Heart right ventricle (tissue), 16 donors: ENCODE measurements at regions of chr16 and their contacts with region 1.

Region 1: DNA sequence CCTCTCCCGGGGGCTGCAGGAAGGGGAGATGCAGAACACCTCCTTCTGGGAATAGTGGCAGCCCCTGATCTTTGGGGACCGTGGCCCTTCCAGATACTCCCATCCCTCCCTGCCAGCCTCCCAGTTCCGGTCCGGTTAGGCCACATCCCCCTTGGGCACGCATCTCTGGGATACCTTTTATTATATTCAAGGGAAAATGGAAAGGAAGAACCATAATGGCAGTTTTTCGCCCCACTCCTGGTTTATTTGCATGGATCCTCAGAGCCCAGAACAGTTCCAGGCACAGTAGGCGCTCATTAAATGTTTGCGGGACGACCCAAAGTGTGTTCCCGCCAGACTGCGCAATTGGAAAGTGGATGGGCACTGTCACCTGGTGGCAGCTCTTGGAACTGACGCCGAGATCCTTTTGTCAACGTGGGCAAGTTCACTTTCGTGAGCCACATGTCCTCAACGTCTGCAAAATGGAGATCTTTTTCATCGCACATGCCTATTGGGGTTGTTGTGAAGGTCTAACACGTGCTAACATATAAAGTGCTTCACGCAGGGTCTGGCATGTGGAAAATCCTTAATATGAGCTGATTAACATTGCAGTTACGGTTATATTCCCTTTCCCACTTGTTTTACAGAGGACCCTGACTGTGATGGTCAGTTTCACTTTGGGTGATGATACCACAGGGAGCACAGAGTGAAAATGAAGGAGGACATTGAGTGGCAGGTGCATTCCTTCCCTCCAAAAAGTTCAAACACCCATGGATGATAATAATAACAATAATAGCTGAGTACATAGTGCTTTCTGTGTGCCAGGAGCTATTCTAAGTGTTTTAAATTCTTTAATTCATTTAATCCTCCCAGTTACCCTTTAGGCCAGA is 1.7 kb upstream of the GPRC5B start:
- DNase-seq: peak; percentile 77 to 78
- ATAC-seq: peak; percentile 22 to 69 (median 42)
- H3K4me3 ChIP-seq: peak overlapping the region in 8 of 10 donors; percentile 74 to 97 (median 88)
- H3K27ac ChIP-seq: no peak overlapping the region
- H3K4me1 ChIP-seq: peaks cover 0 to 34% (median 26%) of the 10 kb centered on the region in 9 donors
- H3K27me3 ChIP-seq: peaks cover 0 to 39% (median 0%) of the 10 kb centered on the region in 7 donors
- CTCF ChIP-seq: peak; percentile 99 to 100 (median 100)

Region 2: DNA sequence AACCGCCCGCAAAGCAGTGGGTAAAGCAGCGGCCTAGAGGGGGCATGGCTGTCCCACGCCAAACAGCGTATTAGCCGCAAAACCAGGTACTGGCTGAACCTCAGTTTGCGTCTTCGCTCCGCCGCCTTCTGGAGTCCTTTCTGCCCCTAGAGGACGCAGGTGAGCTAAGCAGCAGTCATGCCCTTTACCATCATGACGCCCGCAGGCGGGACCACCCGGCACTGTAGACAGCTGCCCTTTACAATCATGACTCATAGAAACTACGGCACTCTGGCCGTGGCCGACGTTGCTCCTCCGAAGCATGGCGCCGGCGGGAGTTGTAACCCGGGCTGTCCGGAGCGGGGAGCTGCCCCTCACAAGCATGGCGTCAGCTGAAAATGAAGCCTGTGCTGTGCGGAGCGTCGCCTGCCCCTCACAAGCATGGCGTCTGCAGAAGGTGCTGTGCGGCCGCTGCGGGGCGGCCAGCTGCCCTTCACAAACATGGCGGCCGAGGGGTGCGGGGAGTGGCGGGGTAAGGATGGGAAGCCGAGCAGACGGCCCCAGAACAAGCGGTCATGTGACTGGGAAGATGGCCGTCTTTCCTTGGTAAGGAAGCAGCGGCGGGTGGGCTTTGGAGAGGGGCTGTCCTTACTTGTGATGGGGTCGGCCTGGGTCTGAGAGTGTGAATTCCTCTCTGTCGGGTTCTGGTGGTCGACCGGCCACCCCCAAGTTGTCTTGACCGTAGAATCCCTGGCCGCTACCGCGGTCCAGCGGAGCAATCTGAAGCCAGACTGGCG is 331.0 kb before region 1 on chr16 and contains the start of gene VPS35L:
- intact Hi-C with region 1: loop called in 7 of 10 experiments (anchors 1 to 5 kb)
- DNase-seq: peak; percentile 97 to 98
- ATAC-seq: peak; percentile 99 to 100 (median 100)
- H3K4me3 ChIP-seq: peak within 1 kb of the TSS; percentile 62 to 93 (median 79)
- H3K27ac ChIP-seq: peak within 1 kb of the TSS; percentile 40 to 95 (median 86)
- H3K4me1 ChIP-seq: peaks cover 0 to 24% (median 16%) of the 10 kb centered on the region in 9 donors
- H3K27me3 ChIP-seq: no peaks in the 10 kb centered on the region
- CTCF ChIP-seq: peak; percentile 50 to 88 (median 76)
- total RNA-seq, gene VPS35L: 24.0 to 35.1 (median 32.0) TPM

Region 3: DNA sequence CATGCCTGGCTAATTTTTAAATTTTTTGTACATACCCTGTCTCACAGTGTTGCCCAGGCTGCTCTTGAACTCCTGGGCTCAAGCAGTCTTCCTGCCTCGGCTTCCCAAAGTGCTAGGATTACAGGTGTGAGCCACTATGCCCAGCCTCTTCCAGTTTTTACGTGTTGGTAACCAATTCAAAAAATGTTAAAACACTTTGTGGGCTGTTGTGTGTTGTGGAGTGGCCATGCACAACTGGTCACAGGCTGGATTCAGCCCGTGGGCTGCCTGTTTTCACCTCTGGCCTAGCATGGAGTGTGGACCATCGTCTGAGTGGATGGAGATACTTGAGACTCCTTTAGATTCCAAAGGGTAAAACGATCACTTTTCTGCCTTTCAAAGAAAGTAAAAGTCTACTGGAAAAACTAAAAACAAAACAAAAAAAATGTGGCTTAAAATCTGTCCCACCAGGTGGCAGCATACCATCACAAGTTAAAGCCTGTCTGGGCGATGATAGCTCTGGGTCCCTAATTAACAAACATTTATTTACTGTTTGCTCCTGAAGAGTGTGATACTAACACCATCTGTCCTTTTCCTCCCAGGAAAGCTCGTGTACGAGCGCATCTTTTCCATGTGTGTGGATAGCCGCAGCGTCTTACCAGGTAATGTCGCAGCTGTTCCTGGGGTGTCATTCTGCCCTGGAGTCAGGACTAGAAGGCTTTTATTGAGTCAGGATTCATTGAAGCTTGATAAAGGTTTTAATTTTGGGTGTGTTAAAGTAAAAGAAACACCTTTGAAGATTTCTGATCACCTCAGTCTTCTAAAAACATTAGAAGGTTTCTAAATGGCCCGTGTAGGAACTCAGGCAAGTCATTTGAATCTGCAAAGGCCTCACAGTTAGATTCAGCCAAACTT is 285.0 kb before region 1 on chr16:
- intact Hi-C with region 1: loop called (anchors 1 to 5 kb)
- DNase-seq: no peak
- ATAC-seq: peak in 3 of 8 donors; percentile 29 to 42 (median 32)
- H3K4me3 ChIP-seq: no peak overlapping the region
- H3K27ac ChIP-seq: no peak overlapping the region
- H3K4me1 ChIP-seq: peaks cover 0 to 20% (median 0%) of the 10 kb centered on the region in 9 donors
- H3K27me3 ChIP-seq: no peaks in the 10 kb centered on the region
- CTCF ChIP-seq: peak; percentile 55 to 80 (median 72)

Region 4: GRCh38 chr16:19666477-19666876 is 219.8 kb before region 1 on chr16:
- intact Hi-C with region 1: loop called in 2 of 10 experiments (anchors 10 kb)
- DNase-seq: peak; percentile 51 to 66
- ATAC-seq: peak; percentile 58 to 97 (median 84)
- H3K4me3 ChIP-seq: peak overlapping the region in 1 of 10 donors; percentile 4
- H3K27ac ChIP-seq: peak overlapping the region in 9 of 10 donors; percentile 3 to 71 (median 51)
- H3K4me1 ChIP-seq: peaks cover 0 to 31% (median 19%) of the 10 kb centered on the region in 9 donors
- H3K27me3 ChIP-seq: no peaks in the 10 kb centered on the region
- CTCF ChIP-seq: no peak

Region 5: DNA sequence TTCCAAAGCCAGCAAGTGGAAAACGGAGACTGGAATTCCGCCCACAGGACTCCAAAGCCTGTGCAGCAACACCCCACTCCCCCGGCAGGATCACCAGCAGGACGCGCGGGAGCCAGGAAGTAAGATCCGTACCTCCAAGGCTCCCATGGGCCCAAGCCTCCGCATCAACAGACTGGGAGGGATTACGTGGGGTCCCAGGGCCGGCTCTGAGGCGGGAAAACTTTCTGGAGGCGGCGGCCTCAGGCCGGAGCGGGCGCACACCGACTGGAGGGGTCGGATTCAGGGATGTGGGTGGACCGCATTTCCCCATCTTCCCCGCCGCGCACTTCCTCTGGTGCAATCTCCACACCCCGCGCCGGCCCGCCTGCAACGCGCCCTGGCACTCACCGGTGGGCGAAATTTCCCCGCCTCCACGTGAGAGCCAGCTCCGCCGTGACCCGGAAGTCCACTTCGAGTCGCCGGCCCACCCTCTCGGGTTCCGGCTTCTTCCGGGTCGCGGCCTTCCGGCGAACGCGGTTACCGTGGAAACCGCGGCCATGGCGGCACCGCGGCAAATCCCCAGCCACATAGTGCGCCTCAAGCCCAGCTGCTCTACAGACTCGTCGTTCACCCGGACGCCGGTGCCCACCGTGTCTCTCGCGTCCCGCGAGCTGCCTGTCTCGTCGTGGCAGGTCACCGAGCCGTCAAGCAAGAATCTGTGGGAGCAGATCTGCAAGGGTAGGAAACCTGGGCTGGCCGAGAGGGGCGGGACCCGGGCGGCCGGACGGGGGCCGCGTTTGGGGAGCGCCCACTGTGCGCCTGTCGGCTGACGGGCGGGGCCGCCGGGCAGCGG is 168.3 kb before region 1 on chr16 and contains the starts of genes IQCK and KNOP1:
- intact Hi-C with region 1: loop called in 7 of 10 experiments (anchors 5 to 10 kb)
- DNase-seq: peak; percentile 90 to 91
- ATAC-seq: peak; percentile 95 to 98 (median 98)
- H3K4me3 ChIP-seq: peak within 1 kb of the TSS; percentile 75 to 99 (median 95)
- H3K27ac ChIP-seq: peak within 1 kb of the TSS in 9 of 10 donors; percentile 51 to 94 (median 85)
- H3K4me1 ChIP-seq: peaks cover 0 to 53% (median 41%) of the 10 kb centered on the region in 9 donors
- H3K27me3 ChIP-seq: no peaks in the 10 kb centered on the region
- CTCF ChIP-seq: peak in 2 of 9 donors; percentile 10 to 18
- total RNA-seq, gene IQCK: 5.5 to 11.7 (median 7.4) TPM
- total RNA-seq, gene KNOP1: 4.5 to 10.2 (median 6.5) TPM

Region 6: DNA sequence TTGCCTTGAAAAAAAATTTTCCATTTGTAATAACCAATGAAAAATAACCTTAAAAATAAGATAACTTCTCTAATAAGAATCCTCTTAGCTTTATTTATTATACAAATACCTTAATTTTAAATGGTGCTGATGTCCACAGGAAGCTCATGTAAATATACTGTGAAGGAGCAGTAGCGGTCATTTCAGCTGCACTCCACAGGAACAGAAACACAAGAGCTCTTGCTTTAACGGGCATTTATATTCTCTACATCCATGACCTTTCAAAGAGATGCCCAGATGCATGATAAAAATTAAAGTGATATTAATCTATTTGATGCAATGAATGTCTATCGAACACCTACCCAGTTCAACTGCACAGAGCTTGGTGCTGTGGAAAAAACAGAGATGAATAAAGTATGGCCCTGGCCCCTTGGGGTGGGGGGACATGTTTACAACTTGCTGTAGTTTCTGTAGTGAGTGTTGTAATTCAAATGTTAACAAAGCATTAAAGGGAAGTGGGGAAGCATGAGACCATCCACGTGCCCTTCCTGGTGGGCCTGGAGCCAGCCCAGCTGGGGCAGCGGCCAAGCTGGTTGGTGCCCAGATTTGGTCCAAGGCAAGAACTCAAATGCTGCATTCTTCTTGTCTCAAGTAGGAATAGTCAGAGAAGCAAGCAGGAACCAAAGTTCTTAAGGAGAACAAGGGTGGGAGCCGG is 120.3 kb before region 1 on chr16:
- intact Hi-C with region 1: loop called in 1 of 10 experiments (anchors 10 kb)
- DNase-seq: peak; percentile 59 to 67
- ATAC-seq: peak; percentile 38 to 79 (median 76)
- H3K4me3 ChIP-seq: peak overlapping the region in 2 of 10 donors; percentile 3 to 6
- H3K27ac ChIP-seq: peak overlapping the region in 5 of 10 donors; percentile 43 to 67 (median 47)
- H3K4me1 ChIP-seq: peaks cover 0 to 48% (median 15%) of the 10 kb centered on the region in 9 donors
- H3K27me3 ChIP-seq: no peaks in the 10 kb centered on the region
- CTCF ChIP-seq: no peak

Region 7: GRCh38 chr16:19822533-19822932 is 63.8 kb before region 1 on chr16:
- intact Hi-C with region 1: no loop called
- DNase-seq: no peak
- ATAC-seq: no peak
- H3K4me3 ChIP-seq: no peak overlapping the region
- H3K27ac ChIP-seq: no peak overlapping the region
- H3K4me1 ChIP-seq: no peaks in the 10 kb centered on the region
- H3K27me3 ChIP-seq: no peaks in the 10 kb centered on the region
- CTCF ChIP-seq: no peak

Region 8: GRCh38 chr16:19844945-19845641 is 41.2 kb before region 1 on chr16:
- intact Hi-C with region 1: loop called in 1 of 10 experiments (anchors 5 kb)
- DNase-seq: no peak
- ATAC-seq: peak in 1 of 8 donors; percentile 36
- H3K4me3 ChIP-seq: no peak overlapping the region
- H3K27ac ChIP-seq: peak overlapping the region in 8 of 10 donors; percentile 13 to 75 (median 40)
- H3K4me1 ChIP-seq: peaks cover 0 to 37% (median 10%) of the 10 kb centered on the region in 9 donors
- H3K27me3 ChIP-seq: no peaks in the 10 kb centered on the region
- CTCF ChIP-seq: no peak

Region 9: DNA sequence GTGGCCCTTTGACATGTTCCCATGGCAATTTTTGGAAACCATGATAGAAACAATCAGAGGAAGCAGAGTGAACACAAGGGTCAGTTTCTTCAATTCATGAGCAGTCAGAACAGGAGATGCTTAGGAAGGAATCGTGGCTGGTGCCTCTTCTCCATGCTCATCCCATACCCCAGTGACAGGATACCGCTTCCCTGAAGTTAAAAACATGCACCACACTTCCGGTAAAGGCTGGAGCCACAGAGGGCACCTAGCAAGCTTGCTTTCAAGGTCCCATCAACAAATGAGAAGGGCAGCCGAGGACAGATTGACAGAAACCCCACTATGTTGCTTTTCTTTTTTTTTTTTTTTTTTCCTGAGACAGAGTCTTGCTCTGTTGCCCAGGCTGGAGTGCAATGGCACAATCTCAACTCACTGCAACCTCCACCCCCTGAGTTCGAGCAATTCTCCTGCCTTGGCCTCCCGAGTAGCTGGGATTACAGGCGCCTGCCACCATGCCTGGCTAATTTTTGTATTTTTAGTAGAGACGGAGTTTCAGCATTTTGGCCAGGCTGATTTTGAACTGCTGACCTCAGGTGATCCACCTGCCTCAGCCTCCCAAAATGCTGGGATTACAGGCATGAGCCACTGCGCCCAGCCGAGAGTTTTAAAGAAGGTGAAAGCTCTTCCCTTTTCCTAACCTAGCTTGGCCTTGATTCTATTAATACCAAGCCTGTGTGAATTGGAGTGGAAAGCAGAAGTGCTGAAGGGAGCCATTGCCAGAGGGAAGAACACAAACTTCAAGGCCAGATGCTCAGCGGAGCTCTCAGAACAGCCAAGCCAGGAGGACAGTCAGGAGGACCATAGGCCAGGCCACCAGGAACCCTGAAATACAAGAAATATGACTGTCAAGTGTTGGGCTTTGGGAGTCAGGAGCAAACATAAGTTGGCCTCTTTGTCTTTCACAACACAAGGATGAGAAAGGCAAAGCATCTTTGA is 424.4 kb after region 1 on chr16:
- intact Hi-C with region 1: no loop called
- DNase-seq: no peak
- ATAC-seq: no peak
- H3K4me3 ChIP-seq: no peak overlapping the region
- H3K27ac ChIP-seq: no peak overlapping the region
- H3K4me1 ChIP-seq: no peaks in the 10 kb centered on the region
- H3K27me3 ChIP-seq: peaks cover 0 to 13% (median 4%) of the 10 kb centered on the region in 7 donors
- CTCF ChIP-seq: no peak